ENCODE measurements at regions of chr12 and their contacts with region 1.

Region 1: GRCh38 chr12:71780237-71780822 is 25.7 kb downstream of the RAB21 start:
- DNase-seq: peak in 32 of 35 experiments; percentile 2 to 68 (median 41)
- ATAC-seq: peak in 2 of 4 experiments; percentile 43 to 58
- H3K4me3 ChIP-seq: no peak overlapping the region
- H3K4me3 Mint-ChIP-seq: no peak overlapping the region
- H3K27ac ChIP-seq: no peak overlapping the region
- H3K27ac Mint-ChIP-seq: peak overlapping the region in 1 of 2 donors; percentile 77
- H3K4me1 ChIP-seq: no peaks in the 10 kb centered on the region
- H3K4me1 Mint-ChIP-seq: peaks cover 9 to 18% (median 10%) of the 10 kb centered on the region in 3 donors
- H3K27me3 ChIP-seq: no peaks in the 10 kb centered on the region
- H3K27me3 Mint-ChIP-seq: no peaks in the 10 kb centered on the region

Region 2: DNA sequence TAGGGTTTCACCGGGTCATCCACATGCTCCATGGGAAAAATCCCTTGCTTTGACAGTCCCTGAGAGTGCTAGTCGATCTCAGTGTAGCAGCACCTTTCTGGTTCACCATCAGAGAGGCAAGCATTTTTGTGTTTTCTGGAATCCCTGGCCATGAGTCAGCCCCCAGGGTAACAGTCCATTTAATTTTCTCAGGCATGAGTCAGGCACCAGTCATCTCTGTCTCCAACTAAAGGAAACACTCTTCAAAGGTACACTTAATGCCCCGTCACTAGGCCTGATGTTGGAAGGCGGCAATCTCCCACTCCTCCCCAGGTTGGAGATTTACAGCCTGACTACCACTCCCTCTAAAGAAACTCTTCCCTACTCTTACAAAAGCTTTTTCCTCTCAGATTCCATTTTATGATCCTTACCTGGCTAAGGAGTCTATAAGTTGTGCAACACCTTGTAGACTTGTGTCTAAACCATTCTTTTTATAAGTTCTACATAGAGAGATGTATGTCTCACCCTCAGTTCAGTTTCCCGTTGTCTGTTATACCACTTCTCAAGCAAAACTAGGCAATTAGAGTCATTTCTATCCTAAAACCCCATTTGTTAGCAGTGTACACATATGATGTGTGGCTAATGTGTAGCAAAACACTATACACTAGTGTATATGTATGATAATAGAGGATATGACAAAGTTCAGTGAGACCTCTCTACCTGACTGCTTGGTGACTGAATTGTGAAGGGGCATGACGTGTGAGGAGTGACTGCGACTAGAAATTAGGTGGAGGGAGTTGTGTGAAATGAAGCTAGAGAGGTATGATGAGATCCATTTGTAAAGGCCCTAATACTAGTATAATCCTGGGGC is 69.8 kb before region 1 on chr12:
- CTCF ChIA-PET with region 1: no interaction called
- POLR2A ChIA-PET with region 1: no interaction called
- DNase-seq: no peak
- ATAC-seq: no peak
- H3K4me3 ChIP-seq: no peak overlapping the region
- H3K4me3 Mint-ChIP-seq: no peak overlapping the region
- H3K27ac ChIP-seq: no peak overlapping the region
- H3K27ac Mint-ChIP-seq: no peak overlapping the region
- H3K4me1 ChIP-seq: peaks cover 0 to 3% of the 10 kb centered on the region in 2 experiments
- H3K4me1 Mint-ChIP-seq: peaks cover 5 to 12% (median 7%) of the 10 kb centered on the region in 3 donors
- H3K27me3 ChIP-seq: peaks cover 0 to 4% of the 10 kb centered on the region in 2 experiments
- H3K27me3 Mint-ChIP-seq: peaks cover 0 to 2% of the 10 kb centered on the region in 2 donors

Region 3: DNA sequence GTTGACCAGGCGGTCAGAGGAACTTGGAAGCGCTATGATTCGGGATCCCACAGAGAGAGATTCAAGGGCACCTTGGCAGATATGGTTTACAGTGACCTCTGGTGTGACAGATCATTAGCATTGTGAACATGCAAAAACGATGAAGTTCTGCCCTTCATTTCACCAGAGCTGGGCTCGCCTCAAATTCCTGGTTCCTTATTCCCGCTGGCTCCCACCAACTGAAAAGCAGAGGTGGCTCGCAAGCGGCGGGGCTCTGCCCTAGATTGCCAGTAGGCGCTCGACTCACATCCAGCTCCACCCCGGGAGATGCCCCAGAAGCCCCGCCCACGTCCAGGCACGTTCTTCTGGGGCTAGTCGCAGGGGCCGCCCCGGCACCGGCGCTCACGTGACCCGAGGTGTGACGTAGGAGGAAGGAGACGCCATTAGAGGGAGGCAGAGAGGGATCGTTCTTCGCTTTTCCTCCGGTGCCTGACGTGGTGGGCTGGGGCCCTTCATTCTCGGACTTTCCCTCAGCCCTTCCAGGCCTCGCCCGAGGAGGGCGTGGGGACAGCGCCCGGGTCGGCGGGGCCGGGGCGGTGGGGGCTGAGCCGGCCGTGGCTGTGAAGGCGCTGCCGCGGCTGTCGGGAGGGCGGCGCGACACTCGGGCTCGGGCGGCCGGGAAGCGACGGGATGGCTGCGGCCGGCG is 25.7 kb before region 1 on chr12 and contains the start of gene RAB21:
- CTCF ChIA-PET with region 1: interaction called, 5 to 6 read pairs
- POLR2A ChIA-PET with region 1: interaction called in 1 of 2 experiments, 14 read pairs
- DNase-seq: peak; percentile 93 to 100 (median 99)
- ATAC-seq: peak; percentile 93 to 98 (median 96)
- H3K4me3 ChIP-seq: peak within 1 kb of the TSS; percentile 81 to 88
- H3K4me3 Mint-ChIP-seq: peak within 1 kb of the TSS; percentile 87 to 95 (median 93)
- H3K27ac ChIP-seq: peak within 1 kb of the TSS; percentile 90
- H3K27ac Mint-ChIP-seq: peak within 1 kb of the TSS; percentile 94
- H3K4me1 ChIP-seq: peaks cover 17 to 20% of the 10 kb centered on the region in 2 experiments
- H3K4me1 Mint-ChIP-seq: peaks cover 42 to 48% (median 47%) of the 10 kb centered on the region in 3 donors
- H3K27me3 ChIP-seq: no peaks in the 10 kb centered on the region
- H3K27me3 Mint-ChIP-seq: peaks cover 3 to 4% of the 10 kb centered on the region in 2 donors
- total RNA-seq, gene RAB21: 55.3 to 65.2 (median 63.6) TPM

Region 4: DNA sequence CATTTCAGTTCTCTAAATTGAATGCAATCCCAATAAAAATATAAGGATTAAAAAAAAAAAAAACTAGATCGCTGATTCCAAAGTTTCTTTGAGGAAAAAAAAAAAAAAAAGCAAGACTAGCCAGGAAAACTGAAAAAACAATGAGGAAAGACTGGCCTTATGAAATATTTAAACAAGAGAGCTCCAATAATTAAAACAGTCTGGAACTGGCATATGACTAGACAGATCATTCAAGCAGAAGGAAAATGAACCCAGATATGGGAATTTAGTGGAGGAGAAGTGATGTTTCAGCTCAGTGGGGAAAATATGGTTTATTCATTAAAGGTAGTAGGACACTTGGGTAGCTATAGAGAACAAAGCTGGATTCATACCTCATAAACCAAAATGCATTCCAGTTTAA is 17.2 kb after region 1 on chr12:
- CTCF ChIA-PET with region 1: interaction called, 5 to 14 read pairs
- POLR2A ChIA-PET with region 1: no interaction called
- DNase-seq: no peak
- ATAC-seq: no peak
- H3K4me3 ChIP-seq: no peak overlapping the region
- H3K4me3 Mint-ChIP-seq: no peak overlapping the region
- H3K27ac ChIP-seq: no peak overlapping the region
- H3K27ac Mint-ChIP-seq: peak overlapping the region in 1 of 2 donors; percentile 44
- H3K4me1 ChIP-seq: no peaks in the 10 kb centered on the region
- H3K4me1 Mint-ChIP-seq: no peaks in the 10 kb centered on the region
- H3K27me3 ChIP-seq: no peaks in the 10 kb centered on the region
- H3K27me3 Mint-ChIP-seq: no peaks in the 10 kb centered on the region

Region 5: DNA sequence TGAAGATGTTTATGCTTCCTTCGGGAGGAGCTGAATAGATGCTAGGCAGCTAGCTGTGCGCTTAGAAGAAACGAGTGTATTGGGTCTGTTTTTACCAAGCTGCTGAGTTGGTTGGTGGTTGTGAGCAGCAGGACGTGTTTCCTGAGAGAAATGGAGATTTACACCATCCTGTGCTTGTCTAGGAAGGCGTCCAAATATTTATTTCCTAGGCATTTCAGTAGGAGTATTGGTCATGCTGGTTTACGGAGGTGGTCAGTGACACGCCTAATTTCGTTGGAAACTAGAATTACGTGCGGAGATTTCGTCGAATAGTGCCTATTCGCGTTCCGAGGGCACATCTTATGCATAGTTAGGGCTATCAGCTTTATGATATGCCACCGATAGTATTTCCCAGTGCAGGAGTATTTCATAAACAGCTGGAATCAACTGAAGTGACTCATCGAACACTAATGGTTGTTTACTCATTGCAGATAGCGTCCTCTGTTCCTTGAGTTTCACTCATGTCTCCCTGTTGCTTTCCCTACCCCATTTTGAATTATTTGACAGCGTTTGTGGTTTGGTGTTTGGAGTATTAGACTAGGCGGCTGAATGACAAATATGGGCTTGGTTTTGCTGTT is 60.0 kb after region 1 on chr12:
- CTCF ChIA-PET with region 1: interaction called, 39 to 79 read pairs
- POLR2A ChIA-PET with region 1: interaction called in 1 of 2 experiments, 5 read pairs
- DNase-seq: peak in 21 of 35 experiments; percentile 4 to 43 (median 21)
- ATAC-seq: peak; percentile 24 to 37 (median 30)
- H3K4me3 ChIP-seq: peak overlapping the region; percentile 86 to 97
- H3K4me3 Mint-ChIP-seq: peak overlapping the region; percentile 92 to 98 (median 97)
- H3K27ac ChIP-seq: peak overlapping the region; percentile 97
- H3K27ac Mint-ChIP-seq: peak overlapping the region; percentile 96 to 99
- H3K4me1 ChIP-seq: peaks cover 15 to 26% of the 10 kb centered on the region in 2 experiments
- H3K4me1 Mint-ChIP-seq: peaks cover 46 to 57% (median 55%) of the 10 kb centered on the region in 3 donors
- H3K27me3 ChIP-seq: peaks cover 0 to 3% of the 10 kb centered on the region in 2 experiments
- H3K27me3 Mint-ChIP-seq: peaks cover 0 to under 1% of the 10 kb centered on the region in 2 donors

Region 6: GRCh38 chr12:71846322-71846940 is 66.1 kb after region 1 on chr12:
- CTCF ChIA-PET with region 1: interaction called, 39 to 79 read pairs
- POLR2A ChIA-PET with region 1: interaction called in 1 of 2 experiments, 7 read pairs
- DNase-seq: peak in 4 of 35 experiments; percentile 6 to 62 (median 17)
- ATAC-seq: peak in 3 of 4 experiments; percentile 35 to 58 (median 45)
- H3K4me3 ChIP-seq: no peak overlapping the region
- H3K4me3 Mint-ChIP-seq: no peak overlapping the region
- H3K27ac ChIP-seq: no peak overlapping the region
- H3K27ac Mint-ChIP-seq: no peak overlapping the region
- H3K4me1 ChIP-seq: peaks cover 12 to 13% of the 10 kb centered on the region in 2 experiments
- H3K4me1 Mint-ChIP-seq: peaks cover 31 to 38% (median 36%) of the 10 kb centered on the region in 3 donors
- H3K27me3 ChIP-seq: no peaks in the 10 kb centered on the region
- H3K27me3 Mint-ChIP-seq: no peaks in the 10 kb centered on the region

Measured in T-cell (primary cell).